ENCODE measurements at regions of chr6 and their contacts with region 1.

Region 1: DNA sequence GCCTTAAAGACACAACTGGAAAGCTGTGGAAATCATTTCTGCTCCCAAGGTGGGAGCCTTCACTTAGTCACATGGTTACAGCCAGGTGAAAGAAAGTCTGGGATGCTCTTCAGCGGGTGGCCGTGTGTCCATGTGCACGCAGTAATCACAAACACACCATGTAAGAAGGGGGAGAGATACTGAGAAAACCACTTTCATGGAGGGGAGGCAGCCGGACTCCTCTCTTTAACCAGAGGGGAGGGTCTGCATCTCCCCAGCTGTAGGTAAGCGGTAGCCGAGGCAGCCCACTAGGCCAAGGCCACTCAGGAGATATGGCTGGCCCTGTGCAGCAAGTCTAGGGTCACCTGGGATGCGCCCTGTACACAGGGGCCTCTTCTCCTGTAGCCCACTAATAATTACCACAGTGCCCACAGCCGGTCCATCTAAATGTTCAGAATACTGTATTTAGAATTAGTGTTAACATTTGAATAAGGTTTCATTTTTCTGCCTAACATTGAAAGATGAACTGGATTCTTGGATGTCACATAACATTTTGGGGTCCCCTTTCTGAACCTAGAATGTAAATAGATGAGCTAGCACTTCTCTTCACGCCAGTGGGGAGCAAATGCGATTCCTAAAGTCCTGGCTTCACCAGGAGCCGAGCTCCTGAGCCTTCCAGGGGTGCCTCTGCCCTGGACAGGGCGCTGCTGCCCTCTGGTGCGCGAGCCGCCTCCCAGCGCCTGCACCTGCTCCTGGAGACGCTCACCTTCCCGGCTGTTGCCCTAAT is 15.9 kb downstream of the GPR31 start:
- DNase-seq: peak; percentile 47 to 54 (median 51)
- H3K4me3 ChIP-seq: no peak overlapping the region
- H3K27ac ChIP-seq: no peak overlapping the region
- H3K4me1 ChIP-seq: peaks cover 0 to 10% (median 7%) of the 10 kb centered on the region in 4 experiments
- H3K27me3 ChIP-seq: no peaks in the 10 kb centered on the region

Region 2: DNA sequence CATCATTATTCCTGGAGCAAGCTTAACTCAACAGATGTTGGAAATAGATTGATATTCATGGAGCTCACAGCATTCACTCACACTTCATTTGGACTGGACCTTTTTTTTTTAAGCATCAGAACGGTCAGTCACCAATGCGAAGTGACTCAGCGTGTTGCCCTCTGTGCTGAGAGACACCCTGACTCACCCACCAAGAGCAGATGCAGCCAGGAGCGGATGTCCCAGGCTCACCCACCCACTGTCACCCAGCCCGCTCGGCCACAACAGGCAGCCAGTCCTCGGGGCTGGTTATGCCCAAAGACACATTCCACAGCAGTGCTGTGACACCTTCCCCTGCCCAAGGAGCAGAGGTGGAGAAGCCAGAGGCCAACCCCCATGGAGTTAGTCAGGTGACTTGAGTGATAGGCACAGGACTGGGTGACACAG is 201.2 kb before region 1 on chr6:
- CTCF ChIA-PET with region 1: no interaction called
- POLR2A ChIA-PET with region 1: no interaction called
- DNase-seq: no peak
- H3K4me3 ChIP-seq: no peak overlapping the region
- H3K27ac ChIP-seq: no peak overlapping the region
- H3K4me1 ChIP-seq: peaks cover 4 to 27% (median 14%) of the 10 kb centered on the region in 4 experiments
- H3K27me3 ChIP-seq: no peaks in the 10 kb centered on the region

Region 3: GRCh38 chr6:166999145-166999883 is 142.5 kb before region 1 on chr6 and contains the start of gene CEP43:
- CTCF ChIA-PET with region 1: interaction called, 24 read pairs
- POLR2A ChIA-PET with region 1: no interaction called
- DNase-seq: peak; percentile 91 to 97 (median 97)
- H3K4me3 ChIP-seq: peak within 1 kb of the TSS; percentile 84 to 99 (median 95)
- H3K27ac ChIP-seq: peak within 1 kb of the TSS; percentile 64 to 87
- H3K4me1 ChIP-seq: peaks cover 21 to 34% (median 26%) of the 10 kb centered on the region in 4 experiments
- H3K27me3 ChIP-seq: no peaks in the 10 kb centered on the region

Region 4: GRCh38 chr6:167047554-167047953 is 94.3 kb before region 1 on chr6:
- CTCF ChIA-PET with region 1: interaction called, 12 read pairs
- POLR2A ChIA-PET with region 1: no interaction called
- DNase-seq: peak; percentile 81 to 96 (median 94)
- H3K4me3 ChIP-seq: peak overlapping the region in 6 of 7 experiments; percentile 20 to 71 (median 31)
- H3K27ac ChIP-seq: peak overlapping the region; percentile 52 to 72
- H3K4me1 ChIP-seq: peaks cover 4 to 29% (median 24%) of the 10 kb centered on the region in 4 experiments
- H3K27me3 ChIP-seq: no peaks in the 10 kb centered on the region

Region 5: GRCh38 chr6:167426651-167427050 is 284.8 kb after region 1 on chr6:
- CTCF ChIA-PET with region 1: no interaction called
- POLR2A ChIA-PET with region 1: no interaction called
- DNase-seq: no peak
- H3K4me3 ChIP-seq: no peak overlapping the region
- H3K27ac ChIP-seq: no peak overlapping the region
- H3K4me1 ChIP-seq: no peaks in the 10 kb centered on the region
- H3K27me3 ChIP-seq: peaks cover 0 to 14% (median 2%) of the 10 kb centered on the region in 5 experiments

Measured in common myeloid progenitor, CD34-positive (primary cell).